Activated CD4-positive, alpha-beta T cell treated with anti-CD3 and anti-CD28 coated beads for 36 hours (primary cell): ENCODE measurements at regions of chr4 and their contacts with region 1.

Region 1: DNA sequence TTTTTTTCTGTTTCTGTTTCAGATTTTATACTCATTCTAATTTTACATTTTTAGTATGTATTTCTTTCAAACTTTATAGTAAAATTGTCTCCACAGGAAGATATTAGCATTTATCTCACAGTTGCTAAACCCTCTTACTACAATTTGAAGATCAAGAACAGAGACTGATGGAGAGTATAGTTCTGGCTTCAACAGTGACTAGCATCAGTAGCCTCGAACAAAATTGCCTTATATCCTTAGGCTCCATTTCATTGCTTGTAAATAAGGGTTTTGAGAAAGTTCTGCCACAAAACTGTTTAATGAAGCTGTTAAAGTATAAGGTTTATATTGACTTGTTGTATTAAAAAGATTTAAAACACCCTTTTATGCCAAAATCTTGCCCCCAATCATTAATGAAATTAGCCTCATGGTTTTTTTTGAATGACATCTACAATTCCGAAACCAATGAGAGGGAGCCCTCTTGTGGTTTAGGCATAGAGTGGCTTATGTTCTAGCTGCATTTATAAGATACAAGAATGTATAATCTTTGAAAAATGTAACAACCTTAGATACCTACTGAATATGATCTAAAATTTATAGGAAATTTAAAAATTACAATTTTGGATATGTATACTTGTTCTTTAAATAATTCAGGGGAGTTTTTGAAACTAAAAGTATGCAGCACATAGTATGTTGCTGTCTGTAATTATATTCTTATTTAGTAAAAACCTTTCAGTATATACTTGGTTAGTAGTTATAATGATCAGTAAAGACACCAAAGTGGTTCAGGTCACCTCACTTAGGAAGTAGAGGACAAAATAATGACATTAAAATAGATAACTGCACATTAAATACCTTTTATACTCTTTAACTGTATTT is 109.8 kb upstream of the HPGD start:
- DNase-seq: no peak
- ATAC-seq: no peak
- H3K4me3 Mint-ChIP-seq: no peak overlapping the region
- H3K27ac Mint-ChIP-seq: no peak overlapping the region
- H3K4me1 Mint-ChIP-seq: no peaks in the 10 kb centered on the region
- H3K27me3 Mint-ChIP-seq: peaks cover 2% of the 10 kb centered on the region

Region 2: DNA sequence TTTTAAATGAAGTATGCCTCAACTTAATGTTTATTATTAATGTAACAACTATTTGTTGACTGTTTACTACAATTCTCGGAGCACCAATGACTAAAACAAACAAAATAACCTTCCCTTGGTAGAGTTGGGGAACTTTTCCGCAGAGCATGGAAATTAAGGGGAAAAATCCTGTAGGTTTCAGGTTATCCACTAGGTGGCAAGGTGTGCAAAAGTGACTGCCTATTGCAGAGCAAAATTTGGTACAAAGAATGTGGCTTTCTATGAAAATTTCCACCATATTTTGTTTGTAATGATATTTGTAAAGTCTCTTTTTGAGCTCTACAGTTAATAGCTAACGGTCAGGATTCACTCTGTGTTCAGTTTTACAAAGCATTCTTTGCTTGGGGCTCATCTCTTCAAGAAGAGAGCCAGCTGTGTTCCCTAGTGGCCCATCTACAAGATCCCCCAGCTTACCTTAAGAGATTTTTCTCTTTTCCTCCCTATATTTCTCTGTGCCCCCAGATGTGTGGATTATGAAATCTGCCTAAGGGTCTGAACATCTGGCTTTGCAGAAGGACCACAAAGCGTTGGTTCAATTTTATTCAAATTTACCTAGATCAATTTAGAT is 409.8 kb before region 1 on chr4:
- CTCF ChIA-PET with region 1: no interaction called
- POLR2A ChIA-PET with region 1: no interaction called
- intact Hi-C with region 1: loop called in 1 of 2 experiments (anchors 5 kb)
- DNase-seq: no peak
- ATAC-seq: peak; percentile 64
- H3K4me3 Mint-ChIP-seq: no peak overlapping the region
- H3K27ac Mint-ChIP-seq: no peak overlapping the region
- H3K4me1 Mint-ChIP-seq: peaks cover 8% of the 10 kb centered on the region
- H3K27me3 Mint-ChIP-seq: peaks cover 41% of the 10 kb centered on the region

Region 3: GRCh38 chr4:174365018-174365587 is 267.0 kb before region 1 on chr4:
- CTCF ChIA-PET with region 1: interaction called, 3 read pairs
- POLR2A ChIA-PET with region 1: no interaction called
- intact Hi-C with region 1: loop called (anchors 1 kb)
- DNase-seq: peak; percentile 11
- ATAC-seq: no peak
- H3K4me3 Mint-ChIP-seq: no peak overlapping the region
- H3K27ac Mint-ChIP-seq: no peak overlapping the region
- H3K4me1 Mint-ChIP-seq: no peaks in the 10 kb centered on the region
- H3K27me3 Mint-ChIP-seq: peaks cover 9% of the 10 kb centered on the region

Region 4: GRCh38 chr4:174423257-174423944 is 208.7 kb before region 1 on chr4:
- CTCF ChIA-PET with region 1: no interaction called
- POLR2A ChIA-PET with region 1: no interaction called
- intact Hi-C with region 1: loop called in 1 of 2 experiments (anchors 5 kb)
- DNase-seq: peak; percentile 49
- ATAC-seq: peak; percentile 96
- H3K4me3 Mint-ChIP-seq: peak overlapping the region; percentile 3
- H3K27ac Mint-ChIP-seq: no peak overlapping the region
- H3K4me1 Mint-ChIP-seq: peaks cover 18% of the 10 kb centered on the region
- H3K27me3 Mint-ChIP-seq: peaks cover 12% of the 10 kb centered on the region